ENCODE measurements at regions of chr1 and their contacts with region 1.

Region 1: GRCh38 chr1:113042285-113043143 is 30.5 kb upstream of the LRIG2 start:
- DNase-seq: peak; percentile 45
- ATAC-seq: no peak
- H3K4me3 Mint-ChIP-seq: no peak overlapping the region
- H3K27ac Mint-ChIP-seq: no peak overlapping the region
- H3K4me1 Mint-ChIP-seq: peaks cover 40% of the 10 kb centered on the region
- H3K27me3 Mint-ChIP-seq: no peaks in the 10 kb centered on the region

Region 2: DNA sequence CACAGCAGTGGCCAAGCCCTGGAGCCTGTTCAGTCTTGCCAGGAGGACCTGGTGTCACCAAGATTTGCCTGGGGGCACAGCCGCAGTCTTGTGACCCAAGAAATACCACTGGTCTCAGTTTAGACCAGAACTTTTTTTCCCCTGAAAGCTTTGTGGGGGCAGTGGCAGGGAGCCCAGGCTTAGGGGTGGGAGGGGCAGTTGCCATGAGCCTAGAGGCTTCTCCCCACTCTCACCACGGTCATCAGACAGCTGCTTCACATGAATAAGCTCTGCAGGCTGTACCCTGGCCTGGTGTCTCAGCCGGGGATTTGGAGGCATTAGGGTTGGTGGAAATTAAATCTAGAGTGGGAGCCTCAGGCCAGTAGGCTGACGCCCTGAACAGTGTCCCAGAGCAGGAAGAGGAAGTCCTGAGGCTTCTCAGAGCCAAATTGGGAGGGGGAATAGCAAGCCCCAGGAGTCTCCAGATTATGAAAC is 160.2 kb before region 1 on chr1:
- CTCF ChIA-PET with region 1: interaction called, 15 read pairs
- POLR2A ChIA-PET with region 1: interaction called, 3 read pairs
- DNase-seq: no peak
- ATAC-seq: no peak
- H3K4me3 Mint-ChIP-seq: no peak overlapping the region
- H3K27ac Mint-ChIP-seq: no peak overlapping the region
- H3K4me1 Mint-ChIP-seq: no peaks in the 10 kb centered on the region
- H3K27me3 Mint-ChIP-seq: peaks cover 16% of the 10 kb centered on the region

Region 3: DNA sequence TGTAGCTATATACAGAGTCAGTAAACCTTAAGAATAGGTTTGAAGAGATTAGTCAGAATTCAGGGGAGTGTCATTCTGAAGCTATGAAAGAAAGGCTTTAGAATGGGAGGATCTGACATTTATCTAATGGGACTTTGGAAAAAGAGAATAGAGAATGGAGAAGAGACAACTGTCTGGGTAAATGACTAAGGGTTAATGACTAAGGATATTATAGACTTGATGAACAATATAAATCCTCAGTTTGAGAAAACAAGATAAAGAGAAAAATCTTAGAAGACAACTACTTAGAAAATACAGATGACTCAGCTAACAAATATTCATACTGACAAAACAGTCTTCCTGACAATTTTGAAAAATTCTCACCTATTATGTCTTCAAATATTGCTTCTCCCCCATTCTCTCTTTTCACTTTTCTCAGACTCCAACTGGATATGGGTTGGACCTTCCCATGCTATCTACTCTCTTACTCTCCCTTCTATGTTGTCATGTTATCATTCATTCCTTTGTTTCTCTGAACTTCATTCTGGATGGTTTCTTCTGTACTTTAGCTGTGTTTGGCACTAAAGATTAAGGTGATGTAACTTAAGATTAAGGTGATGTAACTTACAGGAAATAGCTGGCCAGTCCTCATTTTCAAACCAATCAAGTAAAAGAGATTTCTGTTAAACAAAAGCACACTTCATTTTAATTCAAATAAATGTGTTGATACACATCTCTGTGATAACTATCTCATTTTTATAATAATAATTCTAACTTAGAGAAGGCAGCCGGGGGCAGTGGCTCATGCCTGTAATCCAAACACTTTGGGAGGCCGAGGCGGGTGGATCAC is 106.8 kb before region 1 on chr1:
- CTCF ChIA-PET with region 1: no interaction called
- POLR2A ChIA-PET with region 1: no interaction called
- DNase-seq: no peak
- ATAC-seq: no peak
- H3K4me3 Mint-ChIP-seq: no peak overlapping the region
- H3K27ac Mint-ChIP-seq: peak overlapping the region; percentile 83
- H3K4me1 Mint-ChIP-seq: peaks cover 41% of the 10 kb centered on the region
- H3K27me3 Mint-ChIP-seq: no peaks in the 10 kb centered on the region